ENCODE measurements at regions of chr6 and their contacts with region 1.

Region 1: GRCh38 chr6:159017757-159018559 is 18.0 kb upstream of the RSPH3 start:
- DNase-seq: no peak
- H3K4me3 Mint-ChIP-seq: no peak overlapping the region
- H3K27ac Mint-ChIP-seq: peak overlapping the region; percentile 79
- H3K4me1 Mint-ChIP-seq: peaks cover 55% of the 10 kb centered on the region
- H3K27me3 Mint-ChIP-seq: no peaks in the 10 kb centered on the region

Region 2: GRCh38 chr6:158290659-158291058 is 727.3 kb before region 1 on chr6:
- CTCF ChIA-PET with region 1: no interaction called
- POLR2A ChIA-PET with region 1: no interaction called
- intact Hi-C with region 1: no loop called
- DNase-seq: peak; percentile 75
- H3K4me3 Mint-ChIP-seq: peak overlapping the region; percentile 50
- H3K27ac Mint-ChIP-seq: peak overlapping the region; percentile 79
- H3K4me1 Mint-ChIP-seq: peaks cover 37% of the 10 kb centered on the region
- H3K27me3 Mint-ChIP-seq: no peaks in the 10 kb centered on the region

Region 3: GRCh38 chr6:159098636-159099106 is 80.7 kb after region 1 on chr6:
- CTCF ChIA-PET with region 1: interaction called, 498 read pairs
- POLR2A ChIA-PET with region 1: interaction called, 12 read pairs
- intact Hi-C with region 1: loop called (anchors 1 kb)
- DNase-seq: peak; percentile 83
- H3K4me3 Mint-ChIP-seq: peak overlapping the region; percentile 63
- H3K27ac Mint-ChIP-seq: peak overlapping the region; percentile 87
- H3K4me1 Mint-ChIP-seq: peaks cover 79% of the 10 kb centered on the region
- H3K27me3 Mint-ChIP-seq: no peaks in the 10 kb centered on the region